ENCODE measurements at regions of chr1 and their contacts with region 1.

Region 1: GRCh38 chr1:110053557-110054428 is 16.7 kb downstream of the ALX3 start:
- DNase-seq: peak; percentile 74
- ATAC-seq: peak; percentile 74
- H3K4me3 Mint-ChIP-seq: no peak overlapping the region
- H3K27ac Mint-ChIP-seq: no peak overlapping the region
- H3K4me1 Mint-ChIP-seq: no peaks in the 10 kb centered on the region
- H3K27me3 Mint-ChIP-seq: no peaks in the 10 kb centered on the region

Region 2: DNA sequence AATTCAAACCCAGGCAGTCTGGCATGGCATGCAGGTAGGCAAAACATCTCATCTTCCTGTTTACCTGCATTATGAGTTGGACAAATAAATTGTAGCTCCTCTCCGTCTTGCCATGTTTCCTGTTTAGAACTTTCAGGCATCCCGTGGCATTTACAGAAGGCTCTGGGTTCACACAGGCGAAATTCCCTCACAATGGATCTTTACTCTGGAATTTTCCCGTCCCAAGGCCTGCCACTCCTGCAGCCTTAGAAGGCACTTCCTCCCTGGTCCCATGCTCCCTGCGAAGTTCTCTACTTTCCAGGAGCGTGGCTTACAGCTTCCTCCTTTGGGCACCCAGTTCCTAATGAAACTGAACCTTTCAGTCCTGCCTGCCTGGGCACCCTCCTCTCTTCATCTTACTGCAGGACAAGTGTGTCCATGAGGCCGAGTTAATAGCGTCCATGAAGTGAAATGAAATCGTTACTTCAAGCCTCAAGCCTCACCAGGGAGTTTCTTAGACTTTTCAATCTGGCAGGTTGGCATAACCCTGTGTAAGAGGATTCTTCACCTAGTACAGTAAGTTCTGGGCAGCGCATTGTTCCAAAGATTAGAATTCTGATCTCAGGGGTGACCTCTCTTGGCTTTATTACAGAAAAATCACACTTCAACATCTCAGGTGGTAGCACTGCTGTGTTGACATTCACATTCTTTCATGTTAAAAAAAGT is 106.1 kb before region 1 on chr1:
- CTCF ChIA-PET with region 1: no interaction called
- POLR2A ChIA-PET with region 1: no interaction called
- DNase-seq: no peak
- ATAC-seq: no peak
- H3K4me3 Mint-ChIP-seq: no peak overlapping the region
- H3K27ac Mint-ChIP-seq: no peak overlapping the region
- H3K4me1 Mint-ChIP-seq: peaks cover 6% of the 10 kb centered on the region
- H3K27me3 Mint-ChIP-seq: peaks cover 4% of the 10 kb centered on the region

Region 3: GRCh38 chr1:110067893-110068645 is 14.3 kb after region 1 on chr1:
- CTCF ChIA-PET with region 1: interaction called, 11 read pairs
- POLR2A ChIA-PET with region 1: no interaction called
- DNase-seq: no peak
- ATAC-seq: no peak
- H3K4me3 Mint-ChIP-seq: peak overlapping the region; percentile 38
- H3K27ac Mint-ChIP-seq: no peak overlapping the region
- H3K4me1 Mint-ChIP-seq: peaks cover 9% of the 10 kb centered on the region
- H3K27me3 Mint-ChIP-seq: peaks cover 67% of the 10 kb centered on the region

Region 4: DNA sequence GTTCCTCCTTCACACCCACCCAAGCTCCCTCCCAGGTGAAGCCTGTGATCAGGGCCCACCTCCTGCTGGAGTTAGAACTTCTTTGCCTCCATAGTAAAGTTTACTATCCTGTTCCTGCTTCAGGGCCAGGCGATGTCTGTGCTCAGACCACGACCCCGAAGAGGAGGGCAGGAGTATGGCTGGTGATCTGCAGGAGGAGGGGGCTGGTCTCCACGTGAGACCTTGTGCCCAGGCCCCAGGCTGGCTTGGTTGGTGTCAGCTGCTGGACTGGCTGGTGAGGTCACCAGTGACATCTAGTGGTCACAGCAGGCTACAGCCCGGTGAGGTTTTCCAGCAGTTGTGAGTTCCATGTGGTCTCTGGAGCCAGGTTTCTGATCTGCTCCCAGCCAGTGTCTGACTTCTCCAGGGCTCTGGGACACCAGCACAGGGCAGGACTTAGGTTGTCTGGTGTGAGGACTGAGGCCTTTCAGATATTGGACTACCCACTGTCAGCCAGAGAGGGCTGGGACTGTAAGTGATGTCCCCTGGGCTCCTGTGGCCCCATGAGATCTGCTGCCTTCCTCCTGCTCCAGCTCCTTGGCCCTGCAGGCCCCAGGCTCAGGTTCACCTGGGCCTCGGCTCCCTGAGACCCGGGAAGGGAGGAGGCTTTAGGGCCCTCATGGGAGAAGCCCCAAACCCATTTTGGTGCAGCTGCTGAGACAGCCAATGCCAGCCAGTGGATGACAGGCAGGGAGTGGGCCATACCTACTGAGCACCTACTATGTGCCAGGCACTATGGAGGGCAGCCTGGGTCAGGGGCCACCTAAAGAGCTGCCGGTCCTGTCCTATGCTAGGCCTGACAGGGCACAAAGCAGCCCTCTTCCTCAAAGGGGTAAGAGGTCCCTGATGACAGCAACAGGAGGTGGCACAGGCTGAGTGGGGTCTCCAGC is 52.5 kb after region 1 on chr1:
- CTCF ChIA-PET with region 1: interaction called, 47 read pairs
- POLR2A ChIA-PET with region 1: no interaction called
- DNase-seq: peak; percentile 70
- ATAC-seq: peak; percentile 77
- H3K4me3 Mint-ChIP-seq: no peak overlapping the region
- H3K27ac Mint-ChIP-seq: no peak overlapping the region
- H3K4me1 Mint-ChIP-seq: no peaks in the 10 kb centered on the region
- H3K27me3 Mint-ChIP-seq: peaks cover 8% of the 10 kb centered on the region

Region 5: GRCh38 chr1:110118636-110119615 is 65.1 kb after region 1 on chr1:
- CTCF ChIA-PET with region 1: interaction called, 10 read pairs
- POLR2A ChIA-PET with region 1: no interaction called
- DNase-seq: no peak
- ATAC-seq: no peak
- H3K4me3 Mint-ChIP-seq: no peak overlapping the region
- H3K27ac Mint-ChIP-seq: no peak overlapping the region
- H3K4me1 Mint-ChIP-seq: no peaks in the 10 kb centered on the region
- H3K27me3 Mint-ChIP-seq: peaks cover 19% of the 10 kb centered on the region